ENCODE measurements at regions of chr9 and their contacts with region 1.

Region 1: DNA sequence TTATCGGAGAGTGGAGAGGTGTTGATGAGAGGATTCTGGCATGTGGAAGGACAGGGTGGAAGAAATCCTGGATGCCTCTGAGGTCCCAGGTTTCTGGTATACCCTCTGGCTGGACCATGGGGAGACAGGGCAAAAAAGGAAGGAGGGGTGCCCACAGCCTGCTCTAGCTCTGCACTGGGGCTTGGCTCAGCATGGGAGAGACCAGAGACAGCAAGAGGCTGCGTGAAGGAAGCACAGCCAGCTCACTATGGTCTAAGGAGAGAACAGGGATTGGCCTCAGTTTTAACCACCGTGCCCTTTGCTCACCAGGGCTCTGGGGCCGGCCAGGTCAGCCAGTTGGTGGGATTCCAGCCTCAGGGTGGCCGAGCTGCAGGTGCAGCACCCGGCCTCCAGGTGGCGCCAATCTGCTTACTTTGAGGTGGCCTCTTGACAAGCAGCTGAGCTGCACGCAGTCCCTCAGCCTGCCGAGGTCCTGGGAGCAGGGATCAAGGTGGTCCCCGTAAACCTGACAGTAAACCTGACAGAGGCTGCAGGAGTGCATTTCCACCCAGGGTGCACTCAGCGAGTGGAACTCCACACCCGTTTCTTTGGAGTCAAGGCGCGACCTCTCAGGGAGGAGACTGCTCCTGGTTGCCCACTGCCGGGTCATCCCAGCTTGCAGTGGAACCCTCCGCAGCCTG is 25.0 kb upstream of the SPTLC1 start:
- DNase-seq: peak; percentile 62 to 72 (median 70)
- H3K4me3 ChIP-seq: no peak overlapping the region
- H3K4me3 Mint-ChIP-seq: peak overlapping the region in 1 of 2 donors; percentile 83
- H3K27ac ChIP-seq: no peak overlapping the region
- H3K27ac Mint-ChIP-seq: no peak overlapping the region
- H3K4me1 ChIP-seq: peaks cover 7 to 14% of the 10 kb centered on the region in 2 donors
- H3K4me1 Mint-ChIP-seq: peaks cover 15% of the 10 kb centered on the region
- H3K27me3 ChIP-seq: peaks cover 13 to 26% of the 10 kb centered on the region in 2 donors
- H3K27me3 Mint-ChIP-seq: peaks cover 35 to 46% (median 41%) of the 10 kb centered on the region in 3 donors
- CTCF ChIP-seq: peak; percentile 96

Region 2: GRCh38 chr9:92064711-92065110 is 75.5 kb before region 1 on chr9:
- intact Hi-C with region 1: no loop called
- DNase-seq: no peak
- H3K4me3 ChIP-seq: no peak overlapping the region
- H3K4me3 Mint-ChIP-seq: no peak overlapping the region
- H3K27ac ChIP-seq: no peak overlapping the region
- H3K27ac Mint-ChIP-seq: no peak overlapping the region
- H3K4me1 ChIP-seq: no peaks in the 10 kb centered on the region
- H3K4me1 Mint-ChIP-seq: no peaks in the 10 kb centered on the region
- H3K27me3 ChIP-seq: no peaks in the 10 kb centered on the region
- H3K27me3 Mint-ChIP-seq: no peaks in the 10 kb centered on the region
- CTCF ChIP-seq: no peak

Region 3: GRCh38 chr9:92170848-92171247 is 30.6 kb after region 1 on chr9:
- intact Hi-C with region 1: no loop called
- DNase-seq: no peak
- H3K4me3 ChIP-seq: no peak overlapping the region
- H3K4me3 Mint-ChIP-seq: no peak overlapping the region
- H3K27ac ChIP-seq: no peak overlapping the region
- H3K27ac Mint-ChIP-seq: peak overlapping the region in 1 of 7 donors; percentile 13
- H3K4me1 ChIP-seq: peaks cover 0 to 1% of the 10 kb centered on the region in 2 donors
- H3K4me1 Mint-ChIP-seq: peaks cover under 1% of the 10 kb centered on the region
- H3K27me3 ChIP-seq: no peaks in the 10 kb centered on the region
- H3K27me3 Mint-ChIP-seq: peaks cover 3 to 8% (median 4%) of the 10 kb centered on the region in 3 donors
- CTCF ChIP-seq: no peak

Region 4: GRCh38 chr9:92438900-92439526 is 298.8 kb after region 1 on chr9:
- intact Hi-C with region 1: loop called in 1 of 2 experiments (anchors 5 kb)
- DNase-seq: no peak
- H3K4me3 ChIP-seq: no peak overlapping the region
- H3K4me3 Mint-ChIP-seq: no peak overlapping the region
- H3K27ac ChIP-seq: no peak overlapping the region
- H3K27ac Mint-ChIP-seq: no peak overlapping the region
- H3K4me1 ChIP-seq: no peaks in the 10 kb centered on the region
- H3K4me1 Mint-ChIP-seq: no peaks in the 10 kb centered on the region
- H3K27me3 ChIP-seq: no peaks in the 10 kb centered on the region
- H3K27me3 Mint-ChIP-seq: peaks cover 0 to 2% (median 1%) of the 10 kb centered on the region in 3 donors
- CTCF ChIP-seq: peak; percentile 55

Region 5: DNA sequence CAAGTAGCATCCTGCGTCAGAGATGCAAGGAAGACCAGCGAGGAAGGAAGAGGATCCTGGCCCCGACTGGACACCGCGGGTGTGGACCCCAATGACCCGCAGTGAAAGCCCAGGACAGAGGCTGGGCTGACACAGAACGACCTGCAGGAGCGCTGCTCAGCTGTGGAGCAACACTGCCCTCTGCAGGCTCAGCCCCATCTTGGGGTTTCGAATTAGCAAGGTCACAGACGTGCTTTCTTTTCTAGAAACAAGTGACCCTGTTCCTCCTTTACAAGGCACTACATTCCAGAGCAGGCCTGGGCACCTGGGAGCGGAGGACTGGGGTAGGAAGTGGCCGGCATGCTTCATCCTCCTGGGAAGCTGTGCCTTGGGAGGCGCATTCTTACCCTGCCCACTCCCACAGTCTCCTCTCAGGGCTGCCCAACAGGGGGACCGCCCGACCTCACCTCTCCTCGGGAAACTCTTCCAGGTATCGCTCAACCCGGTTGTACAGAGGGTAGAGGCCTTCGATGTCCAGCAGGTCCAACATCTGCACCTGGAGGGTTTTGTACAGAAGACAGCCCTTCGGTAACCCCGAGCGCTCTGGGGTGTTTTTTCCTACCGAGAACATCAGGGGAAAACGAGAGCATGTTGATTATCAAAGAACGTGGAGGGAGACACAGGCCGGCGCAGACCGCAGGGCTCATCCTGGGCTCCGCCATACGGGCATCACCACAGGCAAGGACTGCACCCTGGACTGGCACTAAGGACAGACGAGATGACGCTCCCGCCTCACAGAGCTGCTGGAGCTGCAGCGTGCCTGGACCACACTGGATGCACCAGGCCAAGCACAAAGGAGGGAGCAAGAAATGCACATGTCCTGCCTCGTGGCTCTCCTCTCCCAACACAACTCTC is 494.7 kb after region 1 on chr9:
- intact Hi-C with region 1: loop called (anchors 2 to 5 kb)
- DNase-seq: peak; percentile 53 to 60 (median 57)
- H3K4me3 ChIP-seq: no peak overlapping the region
- H3K4me3 Mint-ChIP-seq: no peak overlapping the region
- H3K27ac ChIP-seq: no peak overlapping the region
- H3K27ac Mint-ChIP-seq: peak overlapping the region in 3 of 7 donors; percentile 4 to 18 (median 12)
- H3K4me1 ChIP-seq: no peaks in the 10 kb centered on the region
- H3K4me1 Mint-ChIP-seq: no peaks in the 10 kb centered on the region
- H3K27me3 ChIP-seq: no peaks in the 10 kb centered on the region
- H3K27me3 Mint-ChIP-seq: no peaks in the 10 kb centered on the region
- CTCF ChIP-seq: peak; percentile 96

Measured in CD14-positive monocyte (primary cell).